Left cardiac atrium (tissue), 4 donors: ENCODE measurements at regions of chr10 and their contacts with region 1.

Region 1: DNA sequence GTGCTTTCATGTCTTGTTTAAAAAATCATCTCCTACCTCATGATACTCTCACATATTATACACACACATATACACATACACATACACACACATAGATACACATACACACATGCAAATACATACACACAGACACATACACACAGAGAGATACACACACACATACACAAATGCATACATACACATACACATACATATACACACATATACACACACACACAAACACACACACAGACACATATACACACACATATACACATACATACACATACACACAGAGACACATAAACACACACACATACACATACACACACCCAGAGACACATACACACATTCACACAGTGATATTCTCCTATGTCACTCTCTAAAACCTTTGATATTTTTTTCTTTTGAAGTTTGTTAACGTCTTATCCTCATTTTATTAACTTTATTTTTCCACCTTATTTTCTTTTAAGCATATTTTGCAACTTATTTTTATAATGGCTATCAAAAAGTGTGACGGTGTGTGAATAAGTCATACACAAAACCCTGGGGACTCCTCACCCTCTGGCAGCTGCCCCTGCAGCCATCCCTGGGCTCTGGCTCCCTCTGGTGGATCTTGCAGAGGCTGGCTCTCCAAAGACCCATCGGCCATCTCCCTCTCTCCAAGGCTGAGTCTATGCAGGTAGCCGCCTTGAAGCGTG is 3.9 kb upstream of the C10orf120 start:
- DNase-seq: peak; percentile 70
- ATAC-seq: peak; percentile 93 to 96

Region 2: DNA sequence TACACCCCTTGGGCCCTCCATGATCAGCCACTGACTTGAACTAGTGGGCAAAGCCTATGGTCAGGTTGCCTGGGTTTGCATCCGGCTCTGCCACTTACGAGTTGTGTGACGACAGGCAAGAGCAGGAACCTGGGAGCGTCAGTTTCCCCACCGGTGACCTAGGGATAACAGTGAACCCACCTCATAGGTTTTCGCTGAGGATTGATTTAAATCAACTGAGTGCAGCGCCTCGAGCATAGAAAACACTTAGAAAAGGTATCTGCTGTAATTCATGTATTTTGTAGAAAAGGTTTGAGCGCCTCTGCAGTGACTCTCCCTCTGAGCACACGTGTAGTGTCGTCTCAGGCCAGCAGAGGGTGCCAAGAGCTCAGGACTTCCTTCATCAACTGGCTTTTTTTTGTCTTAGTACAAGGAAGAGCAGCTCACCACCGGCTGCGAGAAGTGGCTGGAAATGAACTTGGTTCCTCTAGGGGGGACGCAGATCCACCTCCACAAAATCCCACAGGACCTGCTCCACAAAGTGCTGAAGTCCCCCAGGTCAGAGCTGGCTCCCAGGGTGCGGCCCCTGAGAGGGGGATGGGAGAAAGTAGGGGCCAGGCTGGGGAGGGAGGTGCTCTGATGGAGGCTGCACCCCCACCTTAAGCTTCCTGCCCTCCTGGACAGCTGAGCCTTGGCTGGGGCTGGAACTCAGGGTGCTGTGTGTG is 404.8 kb before region 1 on chr10:
- intact Hi-C with region 1: loop called in 1 of 2 experiments (anchors 10 kb)
- DNase-seq: peak; percentile 73
- ATAC-seq: peak; percentile 77 to 89

Region 3: GRCh38 chr10:122648599-122649428 is 54.8 kb before region 1 on chr10:
- intact Hi-C with region 1: loop called (anchors 1 to 5 kb)
- DNase-seq: peak; percentile 57
- ATAC-seq: peak; percentile 63 to 73

Region 4: DNA sequence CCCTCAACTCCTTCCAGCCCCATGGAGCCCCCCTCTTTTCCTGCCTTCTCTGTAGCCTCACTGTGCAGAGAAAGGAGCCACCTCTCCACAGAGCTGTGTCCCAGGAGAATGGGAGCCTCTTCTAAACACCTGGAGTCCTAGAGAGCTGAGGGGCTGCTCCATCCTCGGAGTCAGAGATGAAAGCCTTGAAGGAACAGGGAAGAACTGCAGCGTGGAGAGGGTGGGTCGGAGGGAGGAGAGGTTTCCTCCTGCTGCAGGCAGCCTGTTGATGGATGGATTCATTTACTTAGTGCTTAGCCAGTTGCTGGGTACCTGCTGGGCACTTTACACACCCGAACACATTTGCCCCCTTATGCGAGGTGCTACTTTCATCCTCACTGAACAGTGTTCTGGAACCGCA is 42.9 kb before region 1 on chr10:
- intact Hi-C with region 1: no loop called
- DNase-seq: no peak
- ATAC-seq: no peak

Region 5: DNA sequence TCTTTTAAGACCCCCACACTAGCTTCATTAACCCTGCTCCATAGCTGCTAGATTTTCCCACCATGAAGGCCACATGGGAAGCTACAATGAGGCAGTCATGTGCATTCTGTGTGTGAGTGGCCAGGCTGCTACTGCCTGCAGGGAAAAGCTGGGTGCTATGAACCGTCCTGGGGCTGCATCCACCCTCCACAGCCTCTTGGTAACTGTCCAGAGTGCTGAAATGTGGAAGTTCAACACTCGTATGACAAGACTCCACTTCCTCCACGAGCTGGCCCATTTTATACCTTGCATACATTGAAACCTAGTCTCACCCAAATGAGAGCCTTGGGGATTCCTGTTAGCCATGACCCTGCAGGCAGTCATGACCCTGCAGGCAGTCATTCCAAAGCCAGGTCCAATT is 82.7 kb after region 1 on chr10:
- intact Hi-C with region 1: no loop called
- DNase-seq: no peak
- ATAC-seq: no peak